ENCODE measurements at regions of chr3 and their contacts with region 1.

Region 1: DNA sequence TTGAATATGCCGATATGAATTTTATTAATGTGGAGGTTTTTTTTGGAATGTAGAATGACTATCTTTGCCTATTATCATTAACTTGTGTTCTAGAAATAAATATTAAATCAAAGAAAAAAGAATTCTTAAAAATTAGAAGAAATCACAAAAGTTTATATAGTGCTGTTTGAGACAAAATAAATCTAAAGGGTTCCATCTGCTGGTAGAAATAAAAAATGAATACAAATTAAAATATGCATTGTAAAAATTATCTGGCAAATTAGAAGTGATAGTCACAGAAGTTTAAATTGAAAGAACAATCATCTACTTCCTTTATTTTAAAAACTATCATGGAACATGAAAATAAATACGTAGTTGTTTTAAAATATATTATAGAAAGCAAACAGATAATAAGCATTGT is 22.7 kb upstream of the ZBTB20 start:
- DNase-seq: no peak
- ATAC-seq: no peak
- H3K4me3 ChIP-seq: no peak overlapping the region
- H3K27ac ChIP-seq: no peak overlapping the region
- H3K4me1 ChIP-seq: no peaks in the 10 kb centered on the region
- H3K27me3 ChIP-seq: no peaks in the 10 kb centered on the region
- CTCF ChIP-seq: no peak; the same call in 1 of the 2 replicates

Region 2: GRCh38 chr3:114764056-114764492 is 405.7 kb before region 1 on chr3:
- CTCF ChIA-PET with region 1: no interaction called
- POLR2A ChIA-PET with region 1: no interaction called
- in situ Hi-C with region 1: no loop called
- intact Hi-C with region 1: no loop called
- DNase-seq: no peak
- ATAC-seq: no peak
- H3K4me3 ChIP-seq: no peak overlapping the region
- H3K27ac ChIP-seq: no peak overlapping the region
- H3K4me1 ChIP-seq: no peaks in the 10 kb centered on the region
- H3K27me3 ChIP-seq: no peaks in the 10 kb centered on the region
- CTCF ChIP-seq: no peak

Region 3: GRCh38 chr3:114827495-114827894 is 342.3 kb before region 1 on chr3:
- CTCF ChIA-PET with region 1: no interaction called
- POLR2A ChIA-PET with region 1: no interaction called
- in situ Hi-C with region 1: no loop called
- intact Hi-C with region 1: loop called (anchors 10 kb)
- DNase-seq: peak; percentile 22
- ATAC-seq: peak; percentile 76; the same call in 1 of the 2 replicates
- H3K4me3 ChIP-seq: no peak overlapping the region
- H3K27ac ChIP-seq: no peak overlapping the region
- H3K4me1 ChIP-seq: no peaks in the 10 kb centered on the region
- H3K27me3 ChIP-seq: no peaks in the 10 kb centered on the region
- CTCF ChIP-seq: peak; percentile 48; the same call in 1 of the 2 replicates

Region 4: GRCh38 chr3:115187149-115187757 is 17.4 kb after region 1 on chr3:
- CTCF ChIA-PET with region 1: no interaction called
- POLR2A ChIA-PET with region 1: no interaction called
- in situ Hi-C with region 1: no loop called
- intact Hi-C with region 1: no loop called
- DNase-seq: no peak
- ATAC-seq: no peak
- H3K4me3 ChIP-seq: no peak overlapping the region
- H3K27ac ChIP-seq: no peak overlapping the region
- H3K4me1 ChIP-seq: no peaks in the 10 kb centered on the region
- H3K27me3 ChIP-seq: no peaks in the 10 kb centered on the region
- CTCF ChIP-seq: no peak

Measured in Panc1 (cell line).